ENCODE measurements at regions of chr6 and their contacts with region 1.

Region 1: GRCh38 chr6:32759669-32760068 is 3.7 kb downstream of the HLA-DQB2 start:
- DNase-seq: no peak
- H3K4me3 ChIP-seq: no peak overlapping the region
- H3K27ac ChIP-seq: no peak overlapping the region
- H3K4me1 ChIP-seq: no peaks in the 10 kb centered on the region
- H3K27me3 ChIP-seq: peaks cover 8 to 30% of the 10 kb centered on the region in 2 experiments
- CTCF ChIP-seq: no peak
- POLR2A ChIP-seq: no peak

Region 2: DNA sequence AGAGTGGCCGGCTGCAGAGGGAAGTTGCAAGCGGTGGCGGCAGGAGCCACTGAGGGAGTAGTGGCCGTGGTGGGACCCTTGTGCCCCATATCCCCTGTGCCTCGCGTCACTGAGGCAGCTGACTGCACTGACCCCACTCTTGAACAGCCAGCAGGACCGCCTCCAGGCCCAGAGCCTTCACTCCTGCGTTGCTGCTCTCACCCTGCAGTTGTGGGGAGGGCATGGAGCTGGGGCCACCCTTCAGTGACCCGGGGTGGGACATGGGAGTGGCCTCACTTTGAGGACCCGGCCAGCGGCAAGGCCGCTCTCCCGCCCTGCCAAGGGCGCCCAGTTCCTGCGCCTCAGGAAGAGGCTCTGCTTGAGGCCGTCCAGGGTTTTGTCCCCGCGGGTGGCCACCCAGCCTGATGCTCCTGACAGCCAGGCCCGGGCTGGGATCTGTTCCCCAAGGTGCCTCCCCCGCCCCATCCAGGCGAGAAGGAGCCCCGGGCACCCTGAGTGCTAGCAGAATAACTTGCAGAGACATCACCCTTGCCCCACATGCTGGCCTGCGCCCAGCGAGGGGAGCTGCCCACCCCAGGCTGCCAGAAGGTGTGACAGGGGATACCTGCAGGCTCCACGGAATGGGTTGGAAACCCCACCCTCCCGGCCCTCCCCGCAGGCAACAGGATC is 275.6 kb before region 1 on chr6:
- CTCF ChIA-PET with region 1: no interaction called
- POLR2A ChIA-PET with region 1: no interaction called
- dilution Hi-C with region 1: no loop called
- intact Hi-C with region 1: no loop called
- DNase-seq: peak; percentile 1
- H3K4me3 ChIP-seq: no peak overlapping the region
- H3K27ac ChIP-seq: no peak overlapping the region
- H3K4me1 ChIP-seq: no peaks in the 10 kb centered on the region
- H3K27me3 ChIP-seq: peaks cover 3 to 4% of the 10 kb centered on the region in 2 experiments
- CTCF ChIP-seq: no peak
- POLR2A ChIP-seq: no peak

Region 3: DNA sequence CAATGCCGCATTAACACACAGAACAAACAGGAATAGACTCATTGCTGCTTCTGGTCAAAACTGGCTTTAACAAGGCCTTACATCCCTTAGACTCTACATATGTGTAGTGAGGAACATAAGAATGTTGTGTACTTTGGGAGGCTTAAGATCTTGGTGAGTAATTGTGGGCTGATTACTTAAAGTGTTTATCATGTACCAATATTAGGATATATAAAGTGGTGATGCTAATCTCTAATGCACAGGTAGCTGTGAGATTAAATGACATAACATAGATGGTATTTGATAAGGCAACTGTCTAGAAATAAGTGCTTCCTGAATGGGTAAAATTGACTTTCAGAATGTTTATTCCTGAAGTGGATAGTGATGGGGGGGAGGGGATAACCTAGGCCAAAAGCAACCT is 96.3 kb before region 1 on chr6:
- CTCF ChIA-PET with region 1: no interaction called
- POLR2A ChIA-PET with region 1: no interaction called
- dilution Hi-C with region 1: no loop called
- intact Hi-C with region 1: loop called (anchors 1 kb)
- DNase-seq: no peak
- H3K4me3 ChIP-seq: no peak overlapping the region
- H3K27ac ChIP-seq: no peak overlapping the region
- H3K4me1 ChIP-seq: no peaks in the 10 kb centered on the region
- H3K27me3 ChIP-seq: peaks cover 1 to 12% of the 10 kb centered on the region in 2 experiments
- CTCF ChIP-seq: no peak
- POLR2A ChIP-seq: no peak